ENCODE measurements at regions of chr3 and their contacts with region 1.

Region 1: DNA sequence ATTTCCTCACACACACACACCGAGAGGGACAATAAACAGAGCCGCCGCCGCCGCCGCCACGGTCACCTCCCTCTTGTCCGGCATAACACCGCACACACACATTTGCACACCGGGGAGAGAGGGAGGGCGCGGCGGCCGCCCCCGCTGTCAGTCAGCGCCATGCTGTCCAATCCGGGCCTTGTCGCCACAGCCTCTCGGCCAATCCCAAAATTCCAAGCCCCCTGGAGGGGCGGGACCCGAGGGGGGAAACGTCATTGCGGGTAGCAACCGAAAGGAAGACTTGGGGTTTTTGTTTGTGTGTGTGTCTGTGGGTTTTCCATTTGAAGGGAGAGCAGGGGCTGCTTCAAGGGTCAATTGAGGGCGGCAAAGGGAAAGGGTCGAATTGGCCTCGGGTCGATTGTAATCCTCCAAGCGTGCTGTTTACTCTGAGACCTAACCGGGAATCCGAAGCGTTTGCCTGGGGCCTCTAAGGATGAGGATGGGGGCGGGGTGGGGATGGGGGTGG is at the start of gene TOP2B:
- DNase-seq: peak; percentile 96
- ATAC-seq: peak; percentile 86
- H3K4me3 ChIP-seq: peak within 1 kb of the TSS; percentile 60 to 96 (median 86)
- H3K4me3 Mint-ChIP-seq: peak within 1 kb of the TSS; percentile 97
- H3K27ac ChIP-seq: peak within 1 kb of the TSS; percentile 93 to 96
- H3K27ac Mint-ChIP-seq: peak within 1 kb of the TSS; percentile 96
- H3K4me1 ChIP-seq: peaks cover 31 to 47% of the 10 kb centered on the region in 2 donors
- H3K4me1 Mint-ChIP-seq: peaks cover 46% of the 10 kb centered on the region
- H3K27me3 ChIP-seq: no peaks in the 10 kb centered on the region
- H3K27me3 Mint-ChIP-seq: no peaks in the 10 kb centered on the region
- CTCF ChIP-seq: no peak
- total RNA-seq, gene TOP2B: 149 and 151 TPM in 2 replicates

Region 2: GRCh38 chr3:23916886-23917678 is 1747.8 kb before region 1 on chr3 and contains the starts of genes NKIRAS1 and RPL15:
- CTCF ChIA-PET with region 1: no interaction called
- POLR2A ChIA-PET with region 1: no interaction called
- intact Hi-C with region 1: loop called (anchors 10 kb)
- DNase-seq: peak; percentile 97
- ATAC-seq: peak; percentile 92
- H3K4me3 ChIP-seq: peak within 1 kb of the TSS; percentile 83 to 99 (median 99)
- H3K4me3 Mint-ChIP-seq: peak within 1 kb of the TSS; percentile 99
- H3K27ac ChIP-seq: peak within 1 kb of the TSS; percentile 85 to 94
- H3K27ac Mint-ChIP-seq: peak within 1 kb of the TSS; percentile 99
- H3K4me1 ChIP-seq: peaks cover 33 to 35% of the 10 kb centered on the region in 2 donors
- H3K4me1 Mint-ChIP-seq: peaks cover 51% of the 10 kb centered on the region
- H3K27me3 ChIP-seq: no peaks in the 10 kb centered on the region
- H3K27me3 Mint-ChIP-seq: peaks cover 4% of the 10 kb centered on the region
- CTCF ChIP-seq: peak; percentile 36
- total RNA-seq, gene NKIRAS1: 3.5 and 4.7 TPM in 2 replicates
- total RNA-seq, gene RPL15: 2,162 and 2,177 TPM in 2 replicates

Region 3: GRCh38 chr3:25633919-25634318 is 30.9 kb before region 1 on chr3:
- CTCF ChIA-PET with region 1: no interaction called
- POLR2A ChIA-PET with region 1: no interaction called
- intact Hi-C with region 1: no loop called
- DNase-seq: no peak
- ATAC-seq: no peak
- H3K4me3 ChIP-seq: no peak overlapping the region
- H3K4me3 Mint-ChIP-seq: no peak overlapping the region
- H3K27ac ChIP-seq: peak overlapping the region in 1 of 2 donors; percentile 2
- H3K27ac Mint-ChIP-seq: no peak overlapping the region
- H3K4me1 ChIP-seq: no peaks in the 10 kb centered on the region
- H3K4me1 Mint-ChIP-seq: peaks cover 3% of the 10 kb centered on the region
- H3K27me3 ChIP-seq: no peaks in the 10 kb centered on the region
- H3K27me3 Mint-ChIP-seq: no peaks in the 10 kb centered on the region
- CTCF ChIP-seq: no peak

Region 4: DNA sequence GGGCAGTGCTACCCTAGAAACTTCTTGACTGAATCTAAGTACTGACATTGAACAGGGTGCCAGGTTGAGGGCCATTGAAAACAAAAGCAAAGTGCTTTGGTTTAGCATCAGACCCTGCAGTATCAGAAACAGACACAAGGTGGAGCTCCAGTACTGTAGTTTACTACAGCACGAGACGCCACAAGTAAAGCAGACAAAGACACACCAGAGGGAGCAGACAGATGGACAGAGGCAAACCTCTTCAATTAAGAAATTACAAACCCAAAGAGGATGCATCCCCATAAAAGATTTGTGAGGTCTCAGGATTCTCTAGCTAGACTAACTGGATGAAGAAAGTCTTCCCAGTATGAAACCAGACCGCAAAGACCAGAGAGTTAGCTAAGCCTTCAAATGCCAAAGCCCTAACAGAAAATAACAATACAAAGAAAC is 16.7 kb before region 1 on chr3:
- CTCF ChIA-PET with region 1: interaction called, 47 read pairs
- POLR2A ChIA-PET with region 1: no interaction called
- intact Hi-C with region 1: loop called (anchors 2 kb)
- DNase-seq: peak; percentile 85
- ATAC-seq: peak; percentile 86
- H3K4me3 ChIP-seq: no peak overlapping the region
- H3K4me3 Mint-ChIP-seq: no peak overlapping the region
- H3K27ac ChIP-seq: no peak overlapping the region
- H3K27ac Mint-ChIP-seq: no peak overlapping the region
- H3K4me1 ChIP-seq: peaks cover 3 to 11% of the 10 kb centered on the region in 2 donors
- H3K4me1 Mint-ChIP-seq: peaks cover 30% of the 10 kb centered on the region
- H3K27me3 ChIP-seq: no peaks in the 10 kb centered on the region
- H3K27me3 Mint-ChIP-seq: no peaks in the 10 kb centered on the region
- CTCF ChIP-seq: peak; percentile 87

Region 5: GRCh38 chr3:25678581-25678980 is 13.7 kb after region 1 on chr3:
- CTCF ChIA-PET with region 1: no interaction called
- POLR2A ChIA-PET with region 1: no interaction called
- intact Hi-C with region 1: no loop called
- DNase-seq: no peak
- ATAC-seq: no peak
- H3K4me3 ChIP-seq: no peak overlapping the region
- H3K4me3 Mint-ChIP-seq: no peak overlapping the region
- H3K27ac ChIP-seq: no peak overlapping the region
- H3K27ac Mint-ChIP-seq: no peak overlapping the region
- H3K4me1 ChIP-seq: no peaks in the 10 kb centered on the region
- H3K4me1 Mint-ChIP-seq: no peaks in the 10 kb centered on the region
- H3K27me3 ChIP-seq: no peaks in the 10 kb centered on the region
- H3K27me3 Mint-ChIP-seq: no peaks in the 10 kb centered on the region
- CTCF ChIP-seq: no peak

Region 6: GRCh38 chr3:25782938-25783660 is 118.2 kb after region 1 on chr3 and contains the start of gene NGLY1:
- CTCF ChIA-PET with region 1: interaction called, 3 read pairs
- POLR2A ChIA-PET with region 1: interaction called, 10 read pairs
- intact Hi-C with region 1: loop called (anchors 1 kb)
- DNase-seq: peak; percentile 90
- ATAC-seq: peak; percentile 82
- H3K4me3 ChIP-seq: peak within 1 kb of the TSS; percentile 81 to 95 (median 86)
- H3K4me3 Mint-ChIP-seq: peak within 1 kb of the TSS; percentile 92
- H3K27ac ChIP-seq: peak within 1 kb of the TSS; percentile 94 to 97
- H3K27ac Mint-ChIP-seq: peak within 1 kb of the TSS; percentile 98
- H3K4me1 ChIP-seq: peaks cover 27 to 32% of the 10 kb centered on the region in 2 donors
- H3K4me1 Mint-ChIP-seq: peaks cover 48% of the 10 kb centered on the region
- H3K27me3 ChIP-seq: no peaks in the 10 kb centered on the region
- H3K27me3 Mint-ChIP-seq: no peaks in the 10 kb centered on the region
- CTCF ChIP-seq: no peak
- total RNA-seq, gene NGLY1: 144 and 145 TPM in 2 replicates

Region 7: DNA sequence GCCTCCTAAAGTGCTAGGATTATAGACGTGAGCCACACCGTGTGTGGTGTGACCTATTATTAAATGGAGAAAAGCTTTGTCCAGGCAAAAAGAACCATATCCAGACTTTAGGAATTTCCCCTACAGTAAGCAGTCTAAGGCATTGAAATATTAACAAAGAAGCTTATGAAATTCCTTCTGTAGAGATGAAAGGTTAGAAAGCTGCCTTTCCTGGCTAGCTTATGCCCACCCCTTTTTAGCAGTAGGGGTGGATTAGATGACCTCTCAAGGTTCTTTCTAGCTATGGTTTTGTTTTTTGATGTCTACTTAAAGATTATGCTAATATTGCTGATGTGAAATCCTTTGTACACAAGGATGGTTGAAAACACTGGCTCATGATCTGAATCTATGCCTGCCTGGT is 139.0 kb after region 1 on chr3:
- CTCF ChIA-PET with region 1: no interaction called
- POLR2A ChIA-PET with region 1: interaction called, 10 read pairs
- intact Hi-C with region 1: no loop called
- DNase-seq: no peak
- ATAC-seq: no peak
- H3K4me3 ChIP-seq: no peak overlapping the region
- H3K4me3 Mint-ChIP-seq: no peak overlapping the region
- H3K27ac ChIP-seq: no peak overlapping the region
- H3K27ac Mint-ChIP-seq: no peak overlapping the region
- H3K4me1 ChIP-seq: no peaks in the 10 kb centered on the region
- H3K4me1 Mint-ChIP-seq: no peaks in the 10 kb centered on the region
- H3K27me3 ChIP-seq: peaks cover 0 to 5% (median 0%) of the 10 kb centered on the region in 4 experiments
- H3K27me3 Mint-ChIP-seq: peaks cover 13% of the 10 kb centered on the region
- CTCF ChIP-seq: no peak

Region 8: GRCh38 chr3:25910997-25911396 is 246.1 kb after region 1 on chr3:
- CTCF ChIA-PET with region 1: no interaction called
- POLR2A ChIA-PET with region 1: no interaction called
- intact Hi-C with region 1: loop called (anchors 5 kb)
- DNase-seq: peak; percentile 44
- ATAC-seq: no peak
- H3K4me3 ChIP-seq: no peak overlapping the region
- H3K4me3 Mint-ChIP-seq: no peak overlapping the region
- H3K27ac ChIP-seq: no peak overlapping the region
- H3K27ac Mint-ChIP-seq: no peak overlapping the region
- H3K4me1 ChIP-seq: no peaks in the 10 kb centered on the region
- H3K4me1 Mint-ChIP-seq: no peaks in the 10 kb centered on the region
- H3K27me3 ChIP-seq: no peaks in the 10 kb centered on the region
- H3K27me3 Mint-ChIP-seq: peaks cover 9% of the 10 kb centered on the region
- CTCF ChIP-seq: peak; percentile 68

Measured in B cell (primary cell).